Right ventricle myocardium superior (tissue), 1 donor: ENCODE measurements at regions of chr5 and their contacts with region 1.

Region 1: GRCh38 chr5:81971712-81972495 is at the start of gene ATG10:
- DNase-seq: peak; percentile 94
- ATAC-seq: peak; percentile 99
- total RNA-seq, gene ATG10: 2.9 TPM

Region 2: DNA sequence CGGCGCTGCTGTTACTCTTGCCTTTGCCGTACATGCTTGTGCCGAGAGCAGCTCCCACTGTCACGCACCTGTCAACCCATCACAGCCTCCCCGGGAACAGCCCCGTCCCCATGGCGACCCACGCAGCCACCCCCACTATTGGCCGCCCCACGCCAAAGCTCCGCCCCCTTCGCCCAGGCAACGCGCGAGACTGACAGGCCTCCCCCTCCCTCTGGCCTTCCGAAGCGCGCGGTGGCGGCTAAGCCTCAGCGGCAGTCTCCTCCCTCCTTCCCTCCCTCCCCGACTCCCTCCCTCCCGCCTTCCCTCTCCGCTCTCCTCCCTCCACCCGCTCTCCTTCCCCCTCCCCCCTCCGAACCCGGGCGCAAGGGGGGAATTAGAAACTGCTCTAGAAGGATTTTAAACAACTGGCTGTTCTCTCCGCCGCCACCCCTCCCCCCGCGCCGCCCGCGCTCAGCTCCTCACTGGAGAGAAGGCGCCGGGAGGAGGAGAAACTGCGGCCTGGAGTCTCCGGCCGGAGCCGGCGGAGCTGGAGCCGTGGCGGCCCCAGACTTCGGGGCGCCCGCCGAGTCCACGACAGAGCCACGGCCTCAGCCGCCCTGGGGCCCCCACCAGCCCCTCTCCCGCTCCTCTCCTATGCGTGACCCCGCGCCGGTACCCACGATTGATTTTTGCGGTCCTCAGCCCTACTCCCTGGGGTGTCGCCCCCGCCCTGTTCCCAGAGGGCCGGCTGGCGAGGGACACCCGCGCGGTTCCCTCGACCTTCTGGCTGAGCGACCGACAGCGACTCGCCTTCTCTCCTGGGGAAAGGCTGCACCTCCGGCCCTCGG is 220.7 kb before region 1 on chr5 and contains the start of gene SSBP2:
- intact Hi-C with region 1: loop called (anchors 10 kb)
- DNase-seq: peak; percentile 100
- ATAC-seq: peak; percentile 95
- total RNA-seq, gene SSBP2: 46.9 TPM

Region 3: GRCh38 chr5:81856948-81857928 is 114.7 kb before region 1 on chr5:
- intact Hi-C with region 1: loop called (anchors 5 kb)
- DNase-seq: peak; percentile 90
- ATAC-seq: peak; percentile 94

Region 4: DNA sequence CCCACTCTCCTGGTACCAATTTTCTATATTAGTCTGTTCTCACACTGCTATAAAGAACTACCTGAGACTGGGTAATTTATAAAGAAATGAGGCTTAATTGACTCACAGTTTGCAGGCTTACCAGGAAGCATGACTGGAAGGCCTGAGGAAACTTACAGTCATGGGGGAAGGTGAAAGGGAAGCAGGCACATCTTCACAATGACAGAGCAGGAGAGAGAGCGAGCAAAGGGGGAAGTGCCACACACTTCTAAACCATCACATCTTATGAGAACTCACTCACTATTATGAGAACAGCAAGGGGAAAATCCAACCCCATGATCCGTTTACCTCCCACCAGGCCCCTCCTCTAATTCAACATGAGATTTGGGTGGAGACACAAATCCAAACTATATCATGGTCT is 72.1 kb after region 1 on chr5:
- intact Hi-C with region 1: no loop called
- DNase-seq: no peak
- ATAC-seq: no peak